CD4-positive, alpha-beta memory T cell (primary cell): ENCODE measurements at regions of chr17 and their contacts with region 1.

Region 1: GRCh38 chr17:68356520-68356919 is 65.2 kb downstream of the ARSG start:
- DNase-seq: peak; percentile 81 to 86 (median 83)
- H3K4me3 ChIP-seq: peak overlapping the region in 1 of 2 donors; percentile 21
- H3K4me3 Mint-ChIP-seq: peak overlapping the region; percentile 72 to 90 (median 78)
- H3K27ac ChIP-seq: peak overlapping the region; percentile 41
- H3K27ac Mint-ChIP-seq: peak overlapping the region; percentile 77 to 94 (median 92)
- H3K4me1 ChIP-seq: peaks cover 63% of the 10 kb centered on the region
- H3K4me1 Mint-ChIP-seq: peaks cover 37 to 70% (median 54%) of the 10 kb centered on the region in 4 donors
- H3K27me3 ChIP-seq: no peaks in the 10 kb centered on the region
- H3K27me3 Mint-ChIP-seq: no peaks in the 10 kb centered on the region

Region 2: DNA sequence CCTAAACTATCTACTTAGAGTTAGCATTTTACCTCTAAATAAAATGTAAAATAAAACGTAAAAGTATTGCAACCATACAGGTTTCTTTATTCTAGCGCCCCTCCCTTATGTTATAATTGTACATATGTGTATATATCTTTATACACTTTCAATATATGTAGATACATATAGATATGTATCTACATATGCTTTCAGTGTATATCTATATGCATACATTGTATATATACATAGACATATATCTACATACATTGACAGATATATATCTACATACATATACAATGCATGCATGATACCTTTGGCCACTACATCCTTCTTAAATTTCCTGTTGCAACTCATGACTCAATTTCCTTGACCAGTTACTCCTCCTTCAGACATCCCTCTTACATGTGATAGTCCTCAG is 514.5 kb before region 1 on chr17:
- CTCF ChIA-PET with region 1: no interaction called
- POLR2A ChIA-PET with region 1: no interaction called
- intact Hi-C with region 1: no loop called
- DNase-seq: no peak
- H3K4me3 ChIP-seq: no peak overlapping the region
- H3K4me3 Mint-ChIP-seq: peak overlapping the region in 1 of 8 donors; percentile 3
- H3K27ac ChIP-seq: no peak overlapping the region
- H3K27ac Mint-ChIP-seq: peak overlapping the region in 1 of 7 donors; percentile 18
- H3K4me1 ChIP-seq: peaks cover 61% of the 10 kb centered on the region
- H3K4me1 Mint-ChIP-seq: peaks cover 33 to 56% (median 43%) of the 10 kb centered on the region in 4 donors
- H3K27me3 ChIP-seq: no peaks in the 10 kb centered on the region
- H3K27me3 Mint-ChIP-seq: no peaks in the 10 kb centered on the region

Region 3: DNA sequence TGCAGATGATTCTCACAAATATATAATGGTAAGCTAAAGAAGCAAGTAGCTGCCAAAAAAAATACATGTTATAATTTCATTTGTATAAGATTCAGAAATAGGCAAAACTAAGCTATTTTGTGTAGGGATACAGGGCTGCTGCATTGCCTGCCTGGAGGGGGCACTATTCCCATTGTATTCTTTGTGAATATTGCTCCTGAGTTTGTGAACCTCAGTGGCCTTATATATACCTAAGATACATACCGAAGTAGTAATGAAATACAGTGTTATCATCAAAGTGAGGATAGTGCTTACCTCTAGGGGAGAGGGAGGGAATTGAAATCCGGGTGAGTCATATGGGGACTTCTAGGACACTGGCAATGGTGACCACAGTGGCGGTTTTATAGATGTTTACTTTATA is 413.7 kb before region 1 on chr17:
- CTCF ChIA-PET with region 1: no interaction called
- POLR2A ChIA-PET with region 1: no interaction called
- intact Hi-C with region 1: no loop called
- DNase-seq: no peak
- H3K4me3 ChIP-seq: no peak overlapping the region
- H3K4me3 Mint-ChIP-seq: no peak overlapping the region
- H3K27ac ChIP-seq: no peak overlapping the region
- H3K27ac Mint-ChIP-seq: peak overlapping the region in 1 of 7 donors; percentile 78
- H3K4me1 ChIP-seq: no peaks in the 10 kb centered on the region
- H3K4me1 Mint-ChIP-seq: peaks cover 0 to 2% (median under 1%) of the 10 kb centered on the region in 4 donors
- H3K27me3 ChIP-seq: no peaks in the 10 kb centered on the region
- H3K27me3 Mint-ChIP-seq: no peaks in the 10 kb centered on the region

Region 4: DNA sequence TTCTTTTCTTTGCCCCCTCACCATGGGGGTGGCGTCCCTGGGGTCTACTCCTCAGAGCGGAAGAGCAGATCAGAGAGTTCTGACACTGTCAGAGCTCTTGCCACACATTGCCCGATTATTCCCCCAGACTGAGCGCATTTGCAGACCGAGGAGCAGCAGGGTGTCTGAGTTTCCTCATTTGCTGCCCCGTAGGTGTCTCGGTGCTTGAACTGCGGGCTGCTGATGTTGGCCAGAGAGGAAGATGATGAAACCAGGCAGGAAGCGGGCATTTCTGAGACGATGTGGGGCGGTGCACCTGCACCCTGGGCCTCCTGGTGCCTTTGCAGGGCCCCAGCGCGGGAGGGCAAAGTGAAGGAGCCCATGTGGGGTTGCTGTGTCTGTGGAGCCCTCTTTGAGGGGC is 10.1 kb before region 1 on chr17:
- CTCF ChIA-PET with region 1: interaction called, 9 read pairs
- POLR2A ChIA-PET with region 1: interaction called, 57 read pairs
- intact Hi-C with region 1: loop called (anchors 1 kb)
- DNase-seq: peak; percentile 57 to 73 (median 63)
- H3K4me3 ChIP-seq: peak overlapping the region; percentile 1 to 36
- H3K4me3 Mint-ChIP-seq: peak overlapping the region; percentile 67 to 91 (median 82)
- H3K27ac ChIP-seq: peak overlapping the region; percentile 62
- H3K27ac Mint-ChIP-seq: peak overlapping the region; percentile 92 to 96 (median 93)
- H3K4me1 ChIP-seq: peaks cover 76% of the 10 kb centered on the region
- H3K4me1 Mint-ChIP-seq: peaks cover 53 to 82% (median 70%) of the 10 kb centered on the region in 4 donors
- H3K27me3 ChIP-seq: no peaks in the 10 kb centered on the region
- H3K27me3 Mint-ChIP-seq: no peaks in the 10 kb centered on the region

Region 5: DNA sequence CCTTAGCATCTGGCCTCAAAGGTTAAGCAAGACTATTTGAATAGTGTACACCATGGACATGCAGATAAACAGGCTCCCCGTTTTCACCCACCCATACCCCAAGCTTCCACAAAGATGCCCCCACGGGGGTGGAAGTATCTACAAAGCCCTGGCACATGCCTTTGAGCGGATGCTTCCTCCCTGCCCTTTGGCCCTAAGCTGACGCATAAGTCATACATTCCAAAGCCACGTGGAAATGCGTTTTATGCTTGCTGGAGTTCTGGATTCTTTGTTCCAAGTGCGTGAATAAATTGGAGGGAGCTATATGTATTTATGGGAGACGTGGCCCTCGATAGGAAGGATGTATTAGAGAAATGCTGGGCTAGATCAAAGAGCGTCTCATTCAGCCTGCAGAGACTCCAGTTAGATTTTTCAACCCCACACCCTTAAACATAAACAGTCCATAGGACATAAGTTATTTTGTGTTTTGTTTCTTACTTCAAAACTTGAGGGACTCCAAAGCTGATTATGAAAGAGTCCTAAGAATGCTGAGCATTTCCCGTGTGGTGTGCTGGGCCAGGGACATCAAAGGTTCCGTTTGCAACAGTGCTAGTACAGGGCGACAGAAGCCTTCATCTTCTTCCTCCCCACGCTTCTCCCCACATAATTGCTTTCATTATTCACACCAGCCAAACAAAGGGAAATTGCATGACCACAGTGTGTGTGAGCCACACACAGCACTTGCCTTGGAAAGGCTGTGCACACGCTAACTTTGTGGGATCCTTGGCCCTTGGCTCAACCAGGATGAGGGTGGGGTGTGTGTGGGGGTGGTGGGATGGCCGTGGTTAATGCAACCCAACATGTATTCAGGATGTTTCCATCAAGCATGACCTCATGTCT is 27.2 kb after region 1 on chr17:
- CTCF ChIA-PET with region 1: interaction called, 4 read pairs
- POLR2A ChIA-PET with region 1: interaction called, 4 read pairs
- intact Hi-C with region 1: loop called (anchors 2 kb)
- DNase-seq: peak in 3 of 5 donors; percentile 26 to 28 (median 27)
- H3K4me3 ChIP-seq: peak overlapping the region in 1 of 2 donors; percentile 20
- H3K4me3 Mint-ChIP-seq: peak overlapping the region; percentile 43 to 83 (median 66)
- H3K27ac ChIP-seq: no peak overlapping the region
- H3K27ac Mint-ChIP-seq: peak overlapping the region; percentile 13 to 86 (median 67)
- H3K4me1 ChIP-seq: peaks cover 26% of the 10 kb centered on the region
- H3K4me1 Mint-ChIP-seq: peaks cover 22 to 43% (median 27%) of the 10 kb centered on the region in 4 donors
- H3K27me3 ChIP-seq: no peaks in the 10 kb centered on the region
- H3K27me3 Mint-ChIP-seq: no peaks in the 10 kb centered on the region